ENCODE measurements at regions of chr3 and their contacts with region 1.

Region 1: DNA sequence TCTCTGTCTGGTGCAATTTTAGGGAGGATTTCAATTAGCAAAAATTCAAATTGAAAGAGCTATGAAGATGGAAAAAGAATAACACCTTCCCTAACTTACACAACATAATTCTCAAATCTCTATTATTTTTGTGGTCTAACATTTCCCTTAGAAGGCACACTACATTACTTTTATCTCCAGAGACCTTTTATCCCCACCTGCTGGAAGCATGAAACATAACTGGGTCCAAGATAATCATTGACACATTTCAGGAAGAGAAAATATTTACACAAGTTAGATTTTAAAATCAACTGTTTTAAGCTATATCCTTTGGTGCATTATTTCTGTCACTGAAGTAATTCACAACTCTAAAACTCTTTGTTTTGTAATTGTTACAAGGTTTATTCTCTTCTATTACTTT is 779.5 kb downstream of the ROBO1 start:
- DNase-seq: no peak
- H3K4me3 Mint-ChIP-seq: no peak overlapping the region
- H3K27ac Mint-ChIP-seq: no peak overlapping the region
- H3K4me1 Mint-ChIP-seq: peaks cover 14% of the 10 kb centered on the region
- H3K27me3 Mint-ChIP-seq: no peaks in the 10 kb centered on the region
- CTCF ChIP-seq: no peak

Region 2: GRCh38 chr3:78666470-78666800 is 321.9 kb before region 1 on chr3:
- CTCF ChIA-PET with region 1: interaction called, 3 read pairs
- intact Hi-C with region 1: loop called (anchors 2 kb)
- DNase-seq: no peak
- H3K4me3 Mint-ChIP-seq: no peak overlapping the region
- H3K27ac Mint-ChIP-seq: no peak overlapping the region
- H3K4me1 Mint-ChIP-seq: no peaks in the 10 kb centered on the region
- H3K27me3 Mint-ChIP-seq: no peaks in the 10 kb centered on the region
- CTCF ChIP-seq: no peak

Region 3: GRCh38 chr3:78741066-78741645 is 247.2 kb before region 1 on chr3:
- CTCF ChIA-PET with region 1: no interaction called
- intact Hi-C with region 1: no loop called
- DNase-seq: no peak
- H3K4me3 Mint-ChIP-seq: no peak overlapping the region
- H3K27ac Mint-ChIP-seq: no peak overlapping the region
- H3K4me1 Mint-ChIP-seq: peaks cover 11% of the 10 kb centered on the region
- H3K27me3 Mint-ChIP-seq: no peaks in the 10 kb centered on the region
- CTCF ChIP-seq: peak; percentile 40

Region 4: GRCh38 chr3:78926523-78926922 is 61.8 kb before region 1 on chr3:
- CTCF ChIA-PET with region 1: no interaction called
- intact Hi-C with region 1: no loop called
- DNase-seq: no peak
- H3K4me3 Mint-ChIP-seq: no peak overlapping the region
- H3K27ac Mint-ChIP-seq: no peak overlapping the region
- H3K4me1 Mint-ChIP-seq: no peaks in the 10 kb centered on the region
- H3K27me3 Mint-ChIP-seq: no peaks in the 10 kb centered on the region
- CTCF ChIP-seq: no peak

Measured in Calu3 (cell line).